Right cardiac atrium (tissue), 5 donors: ENCODE measurements at regions of chr12 and their contacts with region 1.

Region 1: DNA sequence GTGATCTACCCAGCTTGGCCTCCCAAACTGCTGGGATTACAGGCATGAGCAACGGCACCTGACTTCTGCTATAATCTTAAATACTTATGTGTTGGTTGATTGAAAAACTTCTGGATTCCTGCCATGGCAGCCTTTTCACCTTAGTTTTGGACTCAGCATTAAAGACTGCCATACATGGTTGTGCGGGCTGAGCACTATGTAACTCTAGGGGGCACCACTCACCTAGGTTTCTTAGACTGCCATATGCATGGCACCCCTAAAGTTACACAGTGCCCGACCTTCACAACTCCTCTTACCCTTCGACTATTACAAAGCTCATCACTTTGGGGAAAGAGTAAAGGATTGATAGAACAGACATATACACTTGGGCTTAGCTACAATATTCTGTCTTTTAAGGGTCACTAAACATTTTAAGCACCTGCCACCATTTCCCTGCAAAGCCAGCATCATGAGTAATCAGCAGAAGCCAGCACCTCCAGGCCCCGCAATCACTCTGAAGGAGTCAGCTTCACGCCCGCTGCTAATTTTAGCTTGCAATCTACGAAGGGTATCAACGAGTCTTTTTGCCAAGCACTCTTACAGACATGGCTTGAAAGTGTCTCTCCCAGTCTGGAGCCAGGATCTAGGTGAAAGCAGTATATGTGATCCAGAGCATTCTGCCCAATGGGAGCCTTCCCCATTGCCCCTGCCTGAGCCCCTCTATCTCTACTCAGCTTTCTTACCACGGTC is 59.8 kb downstream of the SUDS3 start:
- DNase-seq: no peak
- ATAC-seq: peak; percentile 45 to 63
- H3K4me3 ChIP-seq: no peak overlapping the region
- H3K27ac ChIP-seq: no peak overlapping the region
- H3K4me1 ChIP-seq: no peaks in the 10 kb centered on the region
- H3K27me3 ChIP-seq: no peaks in the 10 kb centered on the region

Region 2: GRCh38 chr12:118044075-118044474 is 392.1 kb before region 1 on chr12:
- intact Hi-C with region 1: no loop called
- DNase-seq: no peak
- ATAC-seq: no peak
- H3K4me3 ChIP-seq: no peak overlapping the region
- H3K27ac ChIP-seq: no peak overlapping the region
- H3K4me1 ChIP-seq: no peaks in the 10 kb centered on the region
- H3K27me3 ChIP-seq: no peaks in the 10 kb centered on the region

Region 3: GRCh38 chr12:118625050-118625675 is 189.0 kb after region 1 on chr12:
- intact Hi-C with region 1: loop called in 2 of 4 experiments (anchors 10 kb)
- DNase-seq: peak in 1 of 3 donors; percentile 28
- ATAC-seq: peak in 1 of 2 donors; percentile 31
- H3K4me3 ChIP-seq: no peak overlapping the region
- H3K27ac ChIP-seq: no peak overlapping the region
- H3K4me1 ChIP-seq: no peaks in the 10 kb centered on the region
- H3K27me3 ChIP-seq: no peaks in the 10 kb centered on the region